ENCODE measurements at regions of chr6 and their contacts with region 1.

Region 1: GRCh38 chr6:61935242-61935846 is 350.7 kb downstream of the KHDRBS2 start:
- DNase-seq: no peak
- ATAC-seq: no peak
- H3K4me3 ChIP-seq: no peak overlapping the region
- H3K4me3 Mint-ChIP-seq: no peak overlapping the region
- H3K27ac ChIP-seq: no peak overlapping the region
- H3K27ac Mint-ChIP-seq: no peak overlapping the region
- H3K4me1 ChIP-seq: no peaks in the 10 kb centered on the region
- H3K4me1 Mint-ChIP-seq: no peaks in the 10 kb centered on the region
- H3K27me3 ChIP-seq: no peaks in the 10 kb centered on the region
- H3K27me3 Mint-ChIP-seq: no peaks in the 10 kb centered on the region
- CTCF ChIP-seq: no peak

Region 2: GRCh38 chr6:61953851-61954250 is 18.5 kb after region 1 on chr6:
- CTCF ChIA-PET with region 1: no interaction called
- POLR2A ChIA-PET with region 1: no interaction called
- intact Hi-C with region 1: no loop called
- DNase-seq: no peak
- ATAC-seq: no peak
- H3K4me3 ChIP-seq: no peak overlapping the region
- H3K4me3 Mint-ChIP-seq: no peak overlapping the region
- H3K27ac ChIP-seq: no peak overlapping the region
- H3K27ac Mint-ChIP-seq: no peak overlapping the region
- H3K4me1 ChIP-seq: no peaks in the 10 kb centered on the region
- H3K4me1 Mint-ChIP-seq: no peaks in the 10 kb centered on the region
- H3K27me3 ChIP-seq: no peaks in the 10 kb centered on the region
- H3K27me3 Mint-ChIP-seq: no peaks in the 10 kb centered on the region
- CTCF ChIP-seq: no peak

Region 3: GRCh38 chr6:62445521-62445920 is 510.2 kb after region 1 on chr6:
- CTCF ChIA-PET with region 1: no interaction called
- POLR2A ChIA-PET with region 1: no interaction called
- intact Hi-C with region 1: loop called in 1 of 2 experiments (anchors 10 kb)
- DNase-seq: no peak
- ATAC-seq: no peak
- H3K4me3 ChIP-seq: no peak overlapping the region
- H3K4me3 Mint-ChIP-seq: no peak overlapping the region
- H3K27ac ChIP-seq: no peak overlapping the region
- H3K27ac Mint-ChIP-seq: no peak overlapping the region
- H3K4me1 ChIP-seq: no peaks in the 10 kb centered on the region
- H3K4me1 Mint-ChIP-seq: no peaks in the 10 kb centered on the region
- H3K27me3 ChIP-seq: no peaks in the 10 kb centered on the region
- H3K27me3 Mint-ChIP-seq: no peaks in the 10 kb centered on the region
- CTCF ChIP-seq: no peak